Adrenal gland (tissue), 19 donors: ENCODE measurements at regions of chr1 and their contacts with region 1.

Region 1: GRCh38 chr1:94329986-94330385 is 88.2 kb upstream of the ABCD3 start:
- DNase-seq: no peak
- H3K4me3 ChIP-seq: no peak overlapping the region
- H3K27ac ChIP-seq: no peak overlapping the region
- H3K4me1 ChIP-seq: peaks cover 0 to 14% of the 10 kb centered on the region in 2 donors
- H3K27me3 ChIP-seq: no peaks in the 10 kb centered on the region
- CTCF ChIP-seq: peak in 4 of 6 experiments; percentile 12 to 46 (median 30)
- POLR2A ChIP-seq: no peak

Region 2: DNA sequence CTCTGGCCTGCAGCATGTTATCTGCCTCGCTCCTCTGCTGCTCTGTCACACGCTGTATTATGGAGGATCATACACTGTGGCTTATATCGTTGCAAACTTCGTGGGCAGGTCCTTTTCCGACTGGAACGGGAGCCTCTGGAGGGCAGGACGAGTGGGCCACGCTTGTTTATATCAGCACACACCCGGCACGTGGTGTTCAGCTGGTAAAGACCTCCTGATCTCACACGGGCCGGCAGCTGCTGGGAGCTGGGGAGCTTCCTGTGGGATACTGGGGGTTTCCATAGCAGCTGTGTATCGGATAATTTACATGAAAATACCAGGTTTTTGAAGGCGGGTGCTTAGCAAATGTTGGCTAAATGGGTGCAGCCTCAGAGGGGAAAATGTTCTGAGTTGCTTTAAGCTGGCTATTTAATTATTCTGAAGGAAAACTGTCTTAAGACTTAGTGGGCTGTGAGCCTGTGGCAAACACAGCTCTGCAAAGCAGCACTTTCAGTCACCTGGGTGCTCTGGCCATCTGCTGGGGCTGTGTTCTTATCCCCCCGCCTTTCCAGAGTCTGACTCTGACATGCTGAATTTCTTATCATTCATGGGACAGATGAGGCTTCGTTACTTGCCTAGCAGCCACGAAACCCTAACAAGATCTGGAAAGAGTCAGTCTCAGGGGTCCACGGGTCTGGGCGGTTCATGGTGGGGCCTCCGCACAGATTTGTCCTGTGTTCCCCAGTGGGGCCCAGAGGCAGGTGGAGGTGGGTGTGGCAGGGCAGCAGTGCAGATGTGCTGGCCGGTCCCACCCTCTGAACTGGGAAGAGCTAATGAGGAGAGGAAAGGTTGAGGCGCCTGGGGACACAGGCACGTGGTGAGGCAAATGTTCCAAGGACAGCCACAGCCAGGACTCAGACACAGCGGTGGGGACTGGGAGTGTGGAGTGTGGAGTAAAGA is 317.0 kb before region 1 on chr1:
- intact Hi-C with region 1: no loop called
- DNase-seq: no peak
- H3K4me3 ChIP-seq: no peak overlapping the region
- H3K27ac ChIP-seq: no peak overlapping the region
- H3K4me1 ChIP-seq: no peaks in the 10 kb centered on the region
- H3K27me3 ChIP-seq: no peaks in the 10 kb centered on the region
- CTCF ChIP-seq: no peak
- POLR2A ChIP-seq: no peak

Region 3: DNA sequence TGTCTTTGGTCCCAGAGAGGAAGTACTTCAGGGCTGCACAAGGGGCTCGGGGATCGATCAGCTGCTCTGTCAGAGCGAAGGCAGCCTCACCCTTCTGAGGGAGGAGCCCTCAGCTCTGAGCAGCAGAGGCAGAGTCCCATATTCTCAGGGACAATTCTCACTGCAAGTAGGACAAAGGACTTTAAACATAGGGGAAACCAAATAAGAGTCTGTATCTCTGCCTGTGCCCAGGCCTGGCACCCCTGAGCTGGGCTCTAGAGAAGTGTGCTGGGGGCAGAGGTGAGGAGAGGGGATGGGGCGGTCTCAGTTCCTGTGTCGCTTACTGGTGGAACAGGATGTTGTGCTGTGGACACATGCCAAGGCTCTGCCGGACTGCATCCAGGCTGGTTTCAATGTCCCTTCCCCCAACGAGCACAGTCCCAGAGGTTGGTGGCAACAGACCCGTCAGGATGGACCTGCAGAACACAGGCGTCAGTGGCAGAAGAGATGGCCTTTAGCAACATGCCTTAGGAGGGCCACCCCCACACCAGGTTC is 285.6 kb before region 1 on chr1:
- intact Hi-C with region 1: loop called (anchors 5 kb)
- DNase-seq: peak; percentile 43 to 88 (median 62)
- H3K4me3 ChIP-seq: no peak overlapping the region
- H3K27ac ChIP-seq: peak overlapping the region in 3 of 5 donors; percentile 35 to 85 (median 64)
- H3K4me1 ChIP-seq: peaks cover 0 to 3% of the 10 kb centered on the region in 2 donors
- H3K27me3 ChIP-seq: no peaks in the 10 kb centered on the region
- CTCF ChIP-seq: no peak
- POLR2A ChIP-seq: no peak

Region 4: GRCh38 chr1:94572780-94573179 is 242.8 kb after region 1 on chr1:
- intact Hi-C with region 1: no loop called
- DNase-seq: no peak
- H3K4me3 ChIP-seq: no peak overlapping the region
- H3K27ac ChIP-seq: no peak overlapping the region
- H3K4me1 ChIP-seq: no peaks in the 10 kb centered on the region
- H3K27me3 ChIP-seq: no peaks in the 10 kb centered on the region
- CTCF ChIP-seq: no peak
- POLR2A ChIP-seq: no peak